Naive thymus-derived CD4-positive, alpha-beta T cell (primary cell): ENCODE measurements at regions of chr12 and their contacts with region 1.

Region 1: DNA sequence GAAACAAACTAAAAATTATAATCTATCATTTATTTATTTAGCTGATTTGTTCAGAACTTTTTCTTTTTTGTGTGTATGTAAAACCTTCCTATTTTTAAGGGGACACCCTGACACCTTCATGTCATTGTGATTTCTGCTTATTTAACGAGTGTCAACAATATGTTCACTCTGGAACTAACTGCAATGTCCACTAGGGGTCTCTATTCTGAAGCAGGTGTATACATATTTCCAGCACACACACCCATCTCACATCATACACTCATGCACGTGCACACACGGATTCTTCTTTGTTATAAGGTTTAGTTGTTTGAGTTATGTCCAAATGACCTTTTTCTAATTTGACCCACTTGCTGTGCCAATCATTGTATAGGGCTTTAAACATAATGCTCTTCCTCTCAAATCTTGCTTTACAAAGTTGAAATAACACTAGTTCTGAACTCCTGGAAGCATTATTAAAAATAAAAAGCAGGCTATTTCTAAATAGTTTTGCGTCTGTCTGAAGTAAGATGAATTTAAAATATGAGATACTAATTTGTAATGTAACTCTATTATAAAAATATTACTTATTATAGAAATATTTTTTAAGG is 15.5 kb downstream of the E2F7 start:
- DNase-seq: peak in 7 of 9 donors; percentile 4 to 54 (median 33)
- ATAC-seq: peak; percentile 87
- H3K4me3 ChIP-seq: no peak overlapping the region
- H3K4me3 Mint-ChIP-seq: no peak overlapping the region
- H3K27ac ChIP-seq: no peak overlapping the region
- H3K27ac Mint-ChIP-seq: no peak overlapping the region
- H3K4me1 ChIP-seq: no peaks in the 10 kb centered on the region
- H3K4me1 Mint-ChIP-seq: peaks cover 0 to 7% (median 0%) of the 10 kb centered on the region in 7 donors
- H3K27me3 ChIP-seq: no peaks in the 10 kb centered on the region
- H3K27me3 Mint-ChIP-seq: no peaks in the 10 kb centered on the region

Region 2: GRCh38 chr12:76820888-76821482 is 228.9 kb before region 1 on chr12:
- CTCF ChIA-PET with region 1: no interaction called
- POLR2A ChIA-PET with region 1: no interaction called
- intact Hi-C with region 1: no loop called
- DNase-seq: no peak
- ATAC-seq: no peak
- H3K4me3 ChIP-seq: no peak overlapping the region
- H3K4me3 Mint-ChIP-seq: no peak overlapping the region
- H3K27ac ChIP-seq: no peak overlapping the region
- H3K27ac Mint-ChIP-seq: peak overlapping the region in 1 of 9 donors; percentile 16
- H3K4me1 ChIP-seq: no peaks in the 10 kb centered on the region
- H3K4me1 Mint-ChIP-seq: no peaks in the 10 kb centered on the region
- H3K27me3 ChIP-seq: no peaks in the 10 kb centered on the region
- H3K27me3 Mint-ChIP-seq: no peaks in the 10 kb centered on the region

Region 3: GRCh38 chr12:77685112-77685511 is 635.3 kb after region 1 on chr12:
- CTCF ChIA-PET with region 1: no interaction called
- POLR2A ChIA-PET with region 1: no interaction called
- intact Hi-C with region 1: loop called in 1 of 2 experiments (anchors 5 kb)
- DNase-seq: no peak
- ATAC-seq: no peak
- H3K4me3 ChIP-seq: no peak overlapping the region
- H3K4me3 Mint-ChIP-seq: no peak overlapping the region
- H3K27ac ChIP-seq: no peak overlapping the region
- H3K27ac Mint-ChIP-seq: no peak overlapping the region
- H3K4me1 ChIP-seq: no peaks in the 10 kb centered on the region
- H3K4me1 Mint-ChIP-seq: no peaks in the 10 kb centered on the region
- H3K27me3 ChIP-seq: no peaks in the 10 kb centered on the region
- H3K27me3 Mint-ChIP-seq: no peaks in the 10 kb centered on the region